Activated T-helper 2 cell treated with anti-CD3 and anti-CD28 coated beads, Interferon-gamma antibody, Interleukin-2, Interleukin-4, amounts not matched to agents 10 μg/mL and 5 μg/mL and 100 μg/mL, durations not matched to agents 14 hours and 24 hours and 36 hours (primary cell): ENCODE measurements at regions of chr6 and their contacts with region 1.

Region 1: GRCh38 chr6:43386492-43386891 is 17.0 kb upstream of the ZNF318 start:
- DNase-seq: no peak
- H3K4me3 Mint-ChIP-seq: no peak overlapping the region
- H3K27ac Mint-ChIP-seq: no peak overlapping the region
- H3K4me1 Mint-ChIP-seq: peaks cover 39% of the 10 kb centered on the region
- H3K27me3 Mint-ChIP-seq: peaks cover 43% of the 10 kb centered on the region

Region 2: GRCh38 chr6:43369174-43370022 is 17.1 kb before region 1 on chr6 and contains the start of gene ZNF318:
- intact Hi-C with region 1: loop called (anchors 1 kb)
- DNase-seq: peak; percentile 93
- H3K4me3 Mint-ChIP-seq: peak within 1 kb of the TSS; percentile 82
- H3K27ac Mint-ChIP-seq: peak within 1 kb of the TSS; percentile 91
- H3K4me1 Mint-ChIP-seq: peaks cover 31% of the 10 kb centered on the region
- H3K27me3 Mint-ChIP-seq: peaks cover 6% of the 10 kb centered on the region
- total RNA-seq, gene ZNF318: 11.5 and 13.2 TPM in 2 replicates

Region 3: DNA sequence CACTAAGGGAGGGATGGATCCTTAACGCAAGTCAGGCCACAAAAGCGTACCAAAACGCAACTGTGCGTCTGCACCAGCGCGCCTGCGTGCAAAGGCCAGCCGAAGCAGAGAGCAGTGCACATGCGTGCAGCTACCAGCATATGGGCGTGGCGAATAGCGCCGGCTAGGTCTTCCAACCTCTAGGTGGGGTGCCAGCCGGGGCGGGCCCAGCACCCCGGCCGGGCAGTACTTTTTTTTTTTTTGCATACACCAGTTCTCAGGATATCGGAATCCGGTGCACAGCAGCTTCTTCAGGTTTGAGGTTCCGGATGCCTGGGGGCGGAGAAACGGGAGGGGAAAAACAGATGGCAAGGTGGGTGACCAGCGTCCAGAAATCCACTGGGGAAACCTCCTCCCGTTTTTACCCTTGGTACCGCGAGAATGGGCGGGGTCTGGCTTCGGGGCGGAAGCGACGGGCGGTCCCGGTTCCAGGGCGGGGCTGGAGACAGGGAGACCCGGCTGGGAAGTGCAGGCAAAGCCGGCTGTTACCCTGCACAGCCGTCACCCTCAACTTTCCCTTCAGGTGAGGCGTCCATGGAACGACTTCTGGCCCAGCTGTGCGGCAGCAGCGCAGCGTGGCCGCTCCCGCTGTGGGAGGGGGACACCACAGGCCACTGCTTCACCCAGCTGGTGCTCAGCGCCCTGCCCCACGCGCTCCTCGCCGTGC is 41.1 kb after region 1 on chr6 and contains the start of gene ABCC10:
- intact Hi-C with region 1: loop called (anchors 5 kb)
- DNase-seq: peak; percentile 93
- H3K4me3 Mint-ChIP-seq: peak within 1 kb of the TSS; percentile 91
- H3K27ac Mint-ChIP-seq: peak within 1 kb of the TSS; percentile 93
- H3K4me1 Mint-ChIP-seq: peaks cover 19% of the 10 kb centered on the region
- H3K27me3 Mint-ChIP-seq: no peaks in the 10 kb centered on the region
- total RNA-seq, gene ABCC10: 45.6 and 46.7 TPM in 2 replicates

Region 4: DNA sequence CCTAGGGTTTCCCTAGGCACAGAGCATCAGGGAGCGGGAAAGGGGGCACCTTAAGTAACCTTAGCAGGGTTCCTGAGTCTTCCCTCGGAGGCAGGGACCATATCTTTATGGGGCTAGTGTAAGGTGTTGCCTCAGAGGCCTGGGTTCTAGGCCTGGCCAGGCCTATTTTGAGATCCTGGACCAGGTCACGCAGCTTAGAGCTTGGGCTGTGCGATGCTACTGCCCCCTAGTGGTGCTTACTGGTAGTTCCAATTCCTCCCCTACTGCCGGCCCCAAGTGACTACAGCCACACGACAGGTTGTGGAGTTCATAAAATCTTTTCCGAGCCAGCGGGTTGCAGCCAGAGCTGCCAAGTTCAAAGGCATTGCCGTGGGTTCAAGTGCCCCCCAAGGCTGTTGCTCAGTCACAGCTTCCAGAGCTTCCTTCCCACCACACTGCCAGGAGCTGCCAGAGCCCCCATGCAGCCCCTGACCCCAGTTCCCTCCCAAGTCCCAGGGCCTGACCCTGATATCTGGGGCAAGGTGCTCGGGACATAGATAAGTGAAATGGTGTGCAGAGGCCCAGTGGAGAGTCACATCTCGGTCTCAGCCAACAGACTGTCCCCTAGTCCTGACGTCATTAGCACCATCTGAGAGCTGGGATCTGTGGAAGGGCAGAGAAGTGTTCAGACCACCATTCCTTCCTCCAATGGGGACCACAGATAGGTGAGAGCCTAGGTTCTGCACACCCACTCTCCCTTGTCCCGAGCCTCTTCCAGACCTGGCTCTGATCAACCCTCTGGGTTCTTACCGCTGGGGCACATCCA is 120.4 kb after region 1 on chr6:
- intact Hi-C with region 1: loop called (anchors 1 kb)
- DNase-seq: peak; percentile 74
- H3K4me3 Mint-ChIP-seq: no peak overlapping the region
- H3K27ac Mint-ChIP-seq: no peak overlapping the region
- H3K4me1 Mint-ChIP-seq: peaks cover 10% of the 10 kb centered on the region
- H3K27me3 Mint-ChIP-seq: peaks cover 17% of the 10 kb centered on the region

Region 5: GRCh38 chr6:43570876-43571441 is 184.5 kb after region 1 on chr6:
- intact Hi-C with region 1: loop called (anchors 5 kb)
- DNase-seq: no peak
- H3K4me3 Mint-ChIP-seq: peak overlapping the region; percentile 40
- H3K27ac Mint-ChIP-seq: peak overlapping the region; percentile 89
- H3K4me1 Mint-ChIP-seq: peaks cover 27% of the 10 kb centered on the region
- H3K27me3 Mint-ChIP-seq: no peaks in the 10 kb centered on the region